ENCODE measurements at regions of chr10 and their contacts with region 1.

Region 1: GRCh38 chr10:21270976-21271375 is 254.5 kb downstream of the SKIDA1 start:
- DNase-seq: no peak
- ATAC-seq: no peak
- H3K4me3 ChIP-seq: no peak overlapping the region
- H3K27ac ChIP-seq: no peak overlapping the region
- H3K4me1 ChIP-seq: no peaks in the 10 kb centered on the region
- H3K27me3 ChIP-seq: 0 out of 4 replicates have a peak, but pooled peaks cover 0 to 2% of the 10 kb centered on the region in 2 experiments
- CTCF ChIP-seq: no peak
- EP300 ChIP-seq: no peak
- POLR2A ChIP-seq: no peak
- RAD21 ChIP-seq: no peak

Region 2: GRCh38 chr10:21078410-21079329 is 192.3 kb before region 1 on chr10:
- CTCF ChIA-PET with region 1: interaction called, 9 read pairs
- POLR2A ChIA-PET with region 1: no interaction called
- RAD21 ChIA-PET with region 1: no interaction called
- SMC1A ChIA-PET with region 1: interaction called, 7 read pairs
- in situ Hi-C with region 1: no loop called
- intact Hi-C with region 1: loop called (anchors 1 kb)
- DNase-seq: no peak
- ATAC-seq: peak; percentile 89
- H3K4me3 ChIP-seq: no peak overlapping the region
- H3K27ac ChIP-seq: no peak overlapping the region
- H3K4me1 ChIP-seq: no peaks in the 10 kb centered on the region
- H3K27me3 ChIP-seq: no peaks in the 10 kb centered on the region; a peak in 2 of 4 replicates
- CTCF ChIP-seq: peak; percentile 68 to 69 (median 69)
- EP300 ChIP-seq: no peak
- POLR2A ChIP-seq: no peak
- RAD21 ChIP-seq: peak; percentile 74

Region 3: DNA sequence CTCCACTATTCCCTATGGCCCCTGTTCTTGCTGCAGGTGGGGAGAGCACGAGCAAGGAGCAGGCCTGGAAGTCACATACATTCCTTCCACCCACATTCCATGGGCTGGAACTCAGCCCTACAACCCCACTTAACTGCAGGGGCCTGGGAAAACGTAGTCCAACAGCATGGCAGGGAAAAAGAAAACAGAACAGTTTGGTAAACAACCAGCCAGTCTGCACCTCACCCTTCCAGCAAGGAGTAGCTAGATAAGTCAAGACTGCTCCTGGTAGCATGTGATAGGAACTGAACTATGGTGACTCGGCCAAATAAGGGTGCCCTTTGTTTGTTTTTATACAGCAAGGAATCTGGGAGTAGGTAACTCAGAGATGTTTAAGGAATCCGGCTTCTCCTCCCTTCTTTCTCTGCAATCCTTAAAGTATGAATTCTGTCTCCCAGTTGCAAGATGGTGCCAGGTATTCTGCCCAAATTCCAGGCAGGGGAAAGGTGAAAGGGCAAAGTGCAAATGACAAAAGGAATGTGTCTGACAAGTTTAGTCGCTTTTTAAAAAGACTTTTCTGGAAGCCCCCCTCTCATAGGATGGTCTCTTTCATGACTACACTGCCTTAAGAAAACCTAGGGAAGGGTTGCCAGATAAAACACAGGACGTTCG is 62.2 kb before region 1 on chr10:
- CTCF ChIA-PET with region 1: no interaction called
- POLR2A ChIA-PET with region 1: no interaction called
- RAD21 ChIA-PET with region 1: no interaction called
- SMC1A ChIA-PET with region 1: no interaction called
- in situ Hi-C with region 1: no loop called
- intact Hi-C with region 1: no loop called
- DNase-seq: no peak
- ATAC-seq: no peak
- H3K4me3 ChIP-seq: no peak overlapping the region
- H3K27ac ChIP-seq: no peak overlapping the region
- H3K4me1 ChIP-seq: no peaks in the 10 kb centered on the region
- H3K27me3 ChIP-seq: no peaks in the 10 kb centered on the region
- CTCF ChIP-seq: no peak
- EP300 ChIP-seq: no peak
- POLR2A ChIP-seq: no peak
- RAD21 ChIP-seq: no peak

Region 4: GRCh38 chr10:21315645-21316281 is 44.8 kb after region 1 on chr10:
- CTCF ChIA-PET with region 1: no interaction called
- POLR2A ChIA-PET with region 1: no interaction called
- RAD21 ChIA-PET with region 1: no interaction called
- SMC1A ChIA-PET with region 1: no interaction called
- in situ Hi-C with region 1: no loop called
- intact Hi-C with region 1: no loop called
- DNase-seq: no peak
- ATAC-seq: peak; percentile 30; the same call in 2 of the 3 replicates
- H3K4me3 ChIP-seq: no peak overlapping the region
- H3K27ac ChIP-seq: no peak overlapping the region
- H3K4me1 ChIP-seq: peaks cover 19% of the 10 kb centered on the region
- H3K27me3 ChIP-seq: no peaks in the 10 kb centered on the region
- CTCF ChIP-seq: no peak
- EP300 ChIP-seq: no peak
- POLR2A ChIP-seq: no peak
- RAD21 ChIP-seq: no peak

Region 5: DNA sequence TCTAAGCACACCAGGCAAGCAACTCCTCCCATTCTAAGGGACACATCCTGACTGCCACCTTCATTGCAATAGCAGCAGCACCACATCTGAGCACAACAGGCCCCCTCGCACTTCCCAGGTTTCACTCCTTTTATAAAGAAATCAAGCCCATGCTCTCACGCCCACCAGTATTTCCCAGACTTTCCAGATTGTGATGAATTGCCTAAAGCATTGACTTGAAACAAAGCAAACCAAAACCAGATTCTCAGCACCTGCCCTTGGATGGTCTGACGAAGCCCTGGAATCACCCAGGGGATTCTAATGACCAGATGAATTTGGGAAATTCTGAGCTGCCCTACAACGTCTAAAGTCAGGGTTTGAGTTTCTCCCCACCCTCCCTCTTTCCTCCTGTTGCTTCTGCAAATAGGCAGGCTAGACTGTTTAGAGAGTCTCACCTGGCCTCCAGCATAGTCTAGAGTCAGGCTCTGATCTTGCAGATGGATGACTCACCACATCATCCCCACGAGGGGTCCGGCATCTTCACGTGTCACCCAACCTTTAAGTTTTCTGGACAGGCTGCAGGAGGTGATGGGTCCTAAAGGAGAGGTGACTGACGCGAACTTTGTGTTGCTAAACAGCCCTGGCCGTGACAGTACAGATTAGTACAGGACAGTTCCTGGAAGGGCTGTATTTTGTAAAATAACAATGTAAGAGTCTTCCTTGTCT is 56.5 kb after region 1 on chr10:
- CTCF ChIA-PET with region 1: no interaction called
- POLR2A ChIA-PET with region 1: no interaction called
- RAD21 ChIA-PET with region 1: no interaction called
- SMC1A ChIA-PET with region 1: no interaction called
- in situ Hi-C with region 1: no loop called
- intact Hi-C with region 1: no loop called
- DNase-seq: no peak
- ATAC-seq: peak; percentile 48
- H3K4me3 ChIP-seq: no peak overlapping the region
- H3K27ac ChIP-seq: no peak overlapping the region
- H3K4me1 ChIP-seq: no peaks in the 10 kb centered on the region
- H3K27me3 ChIP-seq: no peaks in the 10 kb centered on the region
- CTCF ChIP-seq: no peak
- EP300 ChIP-seq: no peak
- POLR2A ChIP-seq: no peak
- RAD21 ChIP-seq: no peak

Region 6: DNA sequence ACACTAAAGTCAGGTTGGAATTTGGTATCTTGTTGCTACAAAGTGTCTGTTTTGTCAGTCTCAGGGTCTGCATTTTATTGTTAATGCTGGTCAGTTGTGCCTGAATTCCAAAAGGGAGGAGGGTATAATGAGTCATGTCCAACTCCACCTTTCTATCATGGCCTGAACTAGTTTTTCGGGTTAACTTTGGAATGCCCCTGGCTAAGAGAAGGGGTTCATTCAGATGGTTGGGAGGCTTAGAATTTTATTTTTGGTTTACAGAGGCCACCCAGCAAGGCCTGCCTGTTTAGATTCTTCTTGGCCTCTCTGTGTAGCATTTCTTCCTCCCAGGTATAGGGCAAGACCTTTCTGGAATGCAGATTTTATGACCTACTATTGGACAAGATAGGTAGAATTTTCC is 161.3 kb after region 1 on chr10:
- CTCF ChIA-PET with region 1: no interaction called
- POLR2A ChIA-PET with region 1: no interaction called
- RAD21 ChIA-PET with region 1: no interaction called
- SMC1A ChIA-PET with region 1: no interaction called
- in situ Hi-C with region 1: no loop called
- intact Hi-C with region 1: no loop called
- DNase-seq: no peak
- ATAC-seq: no peak
- H3K4me3 ChIP-seq: no peak overlapping the region
- H3K27ac ChIP-seq: no peak overlapping the region
- H3K4me1 ChIP-seq: peaks cover 4% of the 10 kb centered on the region; the same call in 1 of the 2 replicates
- H3K27me3 ChIP-seq: no peaks in the 10 kb centered on the region
- CTCF ChIP-seq: no peak
- EP300 ChIP-seq: no peak
- POLR2A ChIP-seq: no peak
- RAD21 ChIP-seq: no peak

Measured in GM12878 (cell line).